Gastrocnemius medialis (tissue), 4 donors: ENCODE measurements at regions of chr12 and their contacts with region 1.

Region 1: GRCh38 chr12:93127582-93128331 is 198.7 kb upstream of the EEA1 start:
- DNase-seq: peak; percentile 36 to 44
- ATAC-seq: peak; percentile 49 to 63
- H3K4me3 ChIP-seq: peak overlapping the region; percentile 19 to 47 (median 22)
- H3K27ac ChIP-seq: peak overlapping the region; percentile 84 to 89 (median 87)
- H3K4me1 ChIP-seq: peaks cover 25 to 27% of the 10 kb centered on the region in 2 donors
- H3K27me3 ChIP-seq: no peaks in the 10 kb centered on the region
- CTCF ChIP-seq: peak; percentile 10 to 47 (median 37)
- POLR2A ChIP-seq: no peak

Region 2: GRCh38 chr12:92408072-92408900 is 719.5 kb before region 1 on chr12:
- in situ Hi-C with region 1: no loop called
- intact Hi-C with region 1: no loop called
- DNase-seq: peak in 1 of 2 donors; percentile 17
- ATAC-seq: no peak
- H3K4me3 ChIP-seq: no peak overlapping the region
- H3K27ac ChIP-seq: no peak overlapping the region
- H3K4me1 ChIP-seq: peaks cover 0 to 28% of the 10 kb centered on the region in 2 donors
- H3K27me3 ChIP-seq: no peaks in the 10 kb centered on the region
- CTCF ChIP-seq: no peak
- POLR2A ChIP-seq: no peak

Region 3: GRCh38 chr12:93237235-93237915 is 109.6 kb after region 1 on chr12:
- in situ Hi-C with region 1: no loop called
- intact Hi-C with region 1: loop called (anchors 5 kb)
- DNase-seq: peak; percentile 69 to 77
- ATAC-seq: peak; percentile 88 to 90
- H3K4me3 ChIP-seq: no peak overlapping the region
- H3K27ac ChIP-seq: peak overlapping the region; percentile 51 to 81 (median 71)
- H3K4me1 ChIP-seq: peaks cover 0 to 21% of the 10 kb centered on the region in 2 donors
- H3K27me3 ChIP-seq: no peaks in the 10 kb centered on the region
- CTCF ChIP-seq: no peak
- POLR2A ChIP-seq: no peak